Natural killer cell (primary cell): ENCODE measurements at regions of chr3 and their contacts with region 1.

Region 1: GRCh38 chr3:13091898-13092611 is 18.8 kb upstream of the IQSEC1 start:
- DNase-seq: peak; percentile 81 to 88
- ATAC-seq: peak; percentile 78 to 98 (median 95)
- H3K4me3 ChIP-seq: no peak overlapping the region
- H3K4me3 Mint-ChIP-seq: no peak overlapping the region
- H3K27ac ChIP-seq: no peak overlapping the region
- H3K27ac Mint-ChIP-seq: no peak overlapping the region
- H3K4me1 ChIP-seq: peaks cover 10% of the 10 kb centered on the region
- H3K4me1 Mint-ChIP-seq: peaks cover 3 to 14% of the 10 kb centered on the region in 2 donors
- H3K27me3 ChIP-seq: no peaks in the 10 kb centered on the region
- H3K27me3 Mint-ChIP-seq: peaks cover 7 to 13% of the 10 kb centered on the region in 2 donors
- CTCF ChIP-seq: peak; percentile 89

Region 2: GRCh38 chr3:13308380-13308801 is 216.3 kb after region 1 on chr3:
- intact Hi-C with region 1: loop called (anchors 10 kb)
- DNase-seq: peak in 1 of 2 donors; percentile 60
- ATAC-seq: peak in 2 of 3 donors; percentile 47 to 53
- H3K4me3 ChIP-seq: no peak overlapping the region
- H3K4me3 Mint-ChIP-seq: no peak overlapping the region
- H3K27ac ChIP-seq: no peak overlapping the region
- H3K27ac Mint-ChIP-seq: peak overlapping the region; percentile 31 to 46
- H3K4me1 ChIP-seq: no peaks in the 10 kb centered on the region
- H3K4me1 Mint-ChIP-seq: peaks cover 0 to 5% of the 10 kb centered on the region in 2 donors
- H3K27me3 ChIP-seq: no peaks in the 10 kb centered on the region
- H3K27me3 Mint-ChIP-seq: no peaks in the 10 kb centered on the region
- CTCF ChIP-seq: peak; percentile 58

Region 3: DNA sequence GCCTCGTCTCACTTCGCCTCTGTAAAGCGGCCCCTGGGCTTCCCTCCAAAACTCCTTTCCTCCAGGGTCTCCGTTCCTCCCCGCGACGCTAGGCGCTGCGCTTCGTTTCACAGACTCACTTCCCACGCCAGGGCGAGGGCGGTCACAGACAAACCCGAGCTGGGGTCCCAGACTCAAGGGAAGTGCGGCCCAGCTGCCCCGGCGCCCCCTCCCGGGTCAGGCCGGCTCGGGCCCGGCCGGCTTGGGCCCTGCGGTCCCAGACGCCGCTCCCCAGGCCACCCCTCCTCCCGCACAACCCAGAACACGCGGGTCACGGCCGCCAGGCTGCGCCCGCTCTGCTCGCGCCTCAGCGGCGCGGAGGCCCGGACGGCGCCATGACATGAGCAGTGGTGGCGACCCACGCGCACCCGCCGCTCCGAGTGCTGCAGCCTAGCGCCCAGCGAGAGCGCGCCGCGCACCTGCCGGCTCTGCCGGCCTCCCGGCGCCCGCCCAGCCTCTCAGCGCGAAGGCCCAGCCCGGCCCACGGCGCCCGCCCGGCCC is 327.5 kb after region 1 on chr3:
- intact Hi-C with region 1: no loop called
- DNase-seq: peak in 1 of 2 donors; percentile 83
- ATAC-seq: peak; percentile 46 to 72 (median 64)
- H3K4me3 ChIP-seq: peak overlapping the region; percentile 68
- H3K4me3 Mint-ChIP-seq: peak overlapping the region; percentile 89
- H3K27ac ChIP-seq: peak overlapping the region; percentile 85
- H3K27ac Mint-ChIP-seq: peak overlapping the region; percentile 94 to 95
- H3K4me1 ChIP-seq: peaks cover 56% of the 10 kb centered on the region
- H3K4me1 Mint-ChIP-seq: peaks cover 47 to 51% of the 10 kb centered on the region in 2 donors
- H3K27me3 ChIP-seq: no peaks in the 10 kb centered on the region
- H3K27me3 Mint-ChIP-seq: no peaks in the 10 kb centered on the region
- CTCF ChIP-seq: peak; percentile 11

Region 4: DNA sequence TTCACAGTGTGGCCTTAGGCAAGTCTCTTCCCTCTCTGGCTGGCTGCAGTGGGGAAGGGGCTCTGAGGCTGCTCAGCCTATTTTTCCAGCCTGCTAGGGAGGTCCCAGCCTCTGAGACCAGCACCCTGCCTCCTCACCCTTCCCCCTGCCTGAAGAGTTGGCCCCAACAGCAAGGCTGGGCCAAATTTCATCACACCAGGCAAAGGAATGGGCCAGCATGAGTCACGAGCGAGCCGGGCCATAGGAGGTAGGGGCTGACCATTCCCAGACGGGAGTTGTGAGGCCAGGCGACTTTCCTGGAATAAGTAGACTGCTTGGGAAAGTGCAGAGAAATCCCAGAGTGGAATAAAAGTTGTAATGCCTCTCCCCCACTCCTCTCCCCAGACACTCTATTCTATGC is 451.2 kb after region 1 on chr3:
- intact Hi-C with region 1: no loop called
- DNase-seq: no peak
- ATAC-seq: no peak
- H3K4me3 ChIP-seq: no peak overlapping the region
- H3K4me3 Mint-ChIP-seq: no peak overlapping the region
- H3K27ac ChIP-seq: no peak overlapping the region
- H3K27ac Mint-ChIP-seq: no peak overlapping the region
- H3K4me1 ChIP-seq: peaks cover 13% of the 10 kb centered on the region
- H3K4me1 Mint-ChIP-seq: peaks cover 0 to 18% of the 10 kb centered on the region in 2 donors
- H3K27me3 ChIP-seq: no peaks in the 10 kb centered on the region
- H3K27me3 Mint-ChIP-seq: peaks cover 22 to 28% of the 10 kb centered on the region in 2 donors
- CTCF ChIP-seq: no peak